Activated naive CD4-positive, alpha-beta T cell treated with anti-CD3 and anti-CD28 coated beads for 36 hours (primary cell): ENCODE measurements at regions of chr1 and their contacts with region 1.

Region 1: DNA sequence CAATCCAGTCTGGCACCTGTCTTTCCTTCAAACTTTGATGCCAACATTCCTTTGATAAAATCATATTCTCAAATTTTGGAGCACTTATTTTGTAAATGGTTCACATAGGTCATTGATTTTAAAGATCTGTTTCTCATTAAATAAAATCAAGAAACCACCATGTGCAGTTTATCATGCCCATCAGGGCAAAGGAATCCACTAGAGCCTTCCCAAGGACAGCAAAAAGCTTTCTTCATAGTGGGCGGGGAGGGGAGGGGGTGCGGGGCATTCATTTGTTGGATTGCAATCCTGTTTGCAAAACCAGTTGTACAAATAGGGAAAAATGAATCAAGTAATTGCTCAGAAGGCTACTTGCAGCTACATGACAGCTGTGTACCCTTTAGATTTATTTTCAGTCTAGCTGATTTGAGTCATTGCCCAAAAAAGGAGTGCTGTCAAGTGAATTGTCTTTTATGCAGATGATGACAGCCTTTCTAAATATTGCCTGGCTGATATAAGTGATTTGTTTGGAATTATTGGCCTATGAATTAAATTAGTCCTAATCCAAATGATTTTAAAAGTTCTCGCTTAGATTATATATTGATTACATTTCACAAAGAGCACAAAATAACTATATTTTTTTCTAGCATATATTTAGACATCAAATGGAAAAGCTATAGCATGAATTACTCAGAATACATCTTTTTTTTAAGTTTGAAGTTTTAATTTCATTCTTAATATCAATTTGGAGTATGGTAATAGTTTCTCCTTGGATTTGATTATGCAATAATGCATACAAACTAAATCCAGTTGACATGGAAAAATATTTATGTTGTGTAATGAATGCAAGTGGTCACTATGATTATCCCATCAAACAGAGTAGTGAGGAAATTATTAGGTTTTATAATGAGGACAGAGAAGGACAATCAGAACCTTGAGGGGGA is 23.2 kb downstream of the LRRC8B start:
- DNase-seq: peak; percentile 56
- H3K4me3 Mint-ChIP-seq: no peak overlapping the region
- H3K27ac Mint-ChIP-seq: peak overlapping the region; percentile 95
- H3K4me1 Mint-ChIP-seq: peaks cover 84% of the 10 kb centered on the region
- H3K27me3 Mint-ChIP-seq: no peaks in the 10 kb centered on the region

Region 2: GRCh38 chr1:89047734-89048133 is 500.1 kb before region 1 on chr1:
- CTCF ChIA-PET with region 1: no interaction called
- intact Hi-C with region 1: loop called (anchors 5 kb)
- DNase-seq: no peak
- H3K4me3 Mint-ChIP-seq: no peak overlapping the region
- H3K27ac Mint-ChIP-seq: no peak overlapping the region
- H3K4me1 Mint-ChIP-seq: peaks cover 11% of the 10 kb centered on the region
- H3K27me3 Mint-ChIP-seq: no peaks in the 10 kb centered on the region

Region 3: DNA sequence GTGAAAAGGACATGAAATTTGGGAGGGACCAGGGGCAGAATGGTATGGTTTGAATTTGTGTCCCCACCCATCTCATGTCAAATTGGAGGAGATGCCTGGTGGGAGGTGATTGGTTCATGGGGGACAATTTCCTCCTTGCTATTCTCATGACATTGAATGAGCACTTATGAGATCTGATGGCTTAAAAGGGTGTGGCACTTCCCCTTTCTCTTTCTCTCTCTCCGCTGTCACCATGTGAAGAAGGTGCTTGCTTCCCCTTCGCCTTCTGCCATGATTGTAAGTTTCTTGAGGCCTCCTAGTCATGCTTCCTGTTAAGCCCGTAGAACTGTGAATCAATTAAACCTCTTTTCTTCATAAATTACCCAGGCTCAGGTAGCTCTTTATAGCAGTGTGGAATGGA is 341.5 kb before region 1 on chr1:
- CTCF ChIA-PET with region 1: no interaction called
- intact Hi-C with region 1: no loop called
- DNase-seq: no peak
- H3K4me3 Mint-ChIP-seq: no peak overlapping the region
- H3K27ac Mint-ChIP-seq: no peak overlapping the region
- H3K4me1 Mint-ChIP-seq: peaks cover 29% of the 10 kb centered on the region
- H3K27me3 Mint-ChIP-seq: no peaks in the 10 kb centered on the region

Region 4: GRCh38 chr1:89536555-89537341 is 11.1 kb before region 1 on chr1:
- CTCF ChIA-PET with region 1: interaction called, 4 read pairs
- intact Hi-C with region 1: loop called (anchors 1 kb)
- DNase-seq: peak; percentile 45
- H3K4me3 Mint-ChIP-seq: no peak overlapping the region
- H3K27ac Mint-ChIP-seq: peak overlapping the region; percentile 79
- H3K4me1 Mint-ChIP-seq: peaks cover 86% of the 10 kb centered on the region
- H3K27me3 Mint-ChIP-seq: no peaks in the 10 kb centered on the region

Region 5: DNA sequence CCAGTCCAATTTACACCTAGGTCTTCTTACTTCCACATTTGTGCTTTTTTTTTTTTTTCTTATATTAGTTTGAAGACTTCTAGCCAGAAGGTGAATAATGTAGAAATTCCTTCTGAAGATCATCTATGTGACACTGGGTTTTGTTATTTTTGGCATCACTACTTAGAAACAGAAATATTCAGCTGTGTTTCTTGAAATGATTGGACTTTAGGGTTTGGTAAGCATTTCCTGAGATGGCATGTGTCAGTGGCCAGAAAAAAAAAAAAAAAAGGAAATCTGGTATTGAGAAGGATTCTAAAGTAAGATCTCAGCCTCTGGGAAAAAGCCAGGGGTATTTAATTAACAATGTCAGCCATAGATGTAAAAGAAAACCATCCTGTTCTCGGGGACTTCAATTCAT is 41.7 kb after region 1 on chr1:
- CTCF ChIA-PET with region 1: interaction called, 3 read pairs
- intact Hi-C with region 1: loop called (anchors 1 kb)
- DNase-seq: no peak
- H3K4me3 Mint-ChIP-seq: no peak overlapping the region
- H3K27ac Mint-ChIP-seq: peak overlapping the region; percentile 47
- H3K4me1 Mint-ChIP-seq: peaks cover 86% of the 10 kb centered on the region
- H3K27me3 Mint-ChIP-seq: no peaks in the 10 kb centered on the region

Region 6: DNA sequence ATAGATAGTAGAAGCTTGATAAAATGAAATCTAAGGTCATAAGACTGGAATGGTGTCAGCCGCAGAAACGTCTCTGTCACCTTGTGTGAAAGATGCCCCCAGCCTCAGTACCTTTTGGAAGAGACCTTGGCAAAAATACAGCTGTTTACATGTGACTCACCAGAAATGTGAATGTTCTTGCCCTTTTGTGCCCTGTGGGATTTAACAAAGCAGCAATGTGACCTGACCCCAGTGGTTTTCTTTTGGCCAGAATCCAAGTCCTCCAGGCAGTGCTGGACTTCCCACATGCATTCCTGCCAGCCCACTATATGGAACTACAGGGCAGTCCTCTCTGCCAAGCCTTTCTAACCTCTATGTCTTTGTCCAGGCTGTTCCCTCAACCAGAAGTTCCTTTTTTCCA is 57.9 kb after region 1 on chr1:
- CTCF ChIA-PET with region 1: interaction called, 5 read pairs
- intact Hi-C with region 1: loop called (anchors 1 kb)
- DNase-seq: no peak
- H3K4me3 Mint-ChIP-seq: no peak overlapping the region
- H3K27ac Mint-ChIP-seq: no peak overlapping the region
- H3K4me1 Mint-ChIP-seq: peaks cover 95% of the 10 kb centered on the region
- H3K27me3 Mint-ChIP-seq: no peaks in the 10 kb centered on the region

Region 7: GRCh38 chr1:89692601-89693521 is 145.0 kb after region 1 on chr1:
- CTCF ChIA-PET with region 1: no interaction called
- intact Hi-C with region 1: no loop called
- DNase-seq: no peak
- H3K4me3 Mint-ChIP-seq: no peak overlapping the region
- H3K27ac Mint-ChIP-seq: peak overlapping the region; percentile 13
- H3K4me1 Mint-ChIP-seq: peaks cover 84% of the 10 kb centered on the region
- H3K27me3 Mint-ChIP-seq: no peaks in the 10 kb centered on the region

Region 8: GRCh38 chr1:89855413-89856123 is 307.7 kb after region 1 on chr1:
- CTCF ChIA-PET with region 1: no interaction called
- intact Hi-C with region 1: loop called (anchors 2 kb)
- DNase-seq: no peak
- H3K4me3 Mint-ChIP-seq: peak overlapping the region; percentile 44
- H3K27ac Mint-ChIP-seq: no peak overlapping the region
- H3K4me1 Mint-ChIP-seq: peaks cover 11% of the 10 kb centered on the region
- H3K27me3 Mint-ChIP-seq: no peaks in the 10 kb centered on the region